A549 (cell line): ENCODE measurements at regions of chr6 and their contacts with region 1.

Region 1: DNA sequence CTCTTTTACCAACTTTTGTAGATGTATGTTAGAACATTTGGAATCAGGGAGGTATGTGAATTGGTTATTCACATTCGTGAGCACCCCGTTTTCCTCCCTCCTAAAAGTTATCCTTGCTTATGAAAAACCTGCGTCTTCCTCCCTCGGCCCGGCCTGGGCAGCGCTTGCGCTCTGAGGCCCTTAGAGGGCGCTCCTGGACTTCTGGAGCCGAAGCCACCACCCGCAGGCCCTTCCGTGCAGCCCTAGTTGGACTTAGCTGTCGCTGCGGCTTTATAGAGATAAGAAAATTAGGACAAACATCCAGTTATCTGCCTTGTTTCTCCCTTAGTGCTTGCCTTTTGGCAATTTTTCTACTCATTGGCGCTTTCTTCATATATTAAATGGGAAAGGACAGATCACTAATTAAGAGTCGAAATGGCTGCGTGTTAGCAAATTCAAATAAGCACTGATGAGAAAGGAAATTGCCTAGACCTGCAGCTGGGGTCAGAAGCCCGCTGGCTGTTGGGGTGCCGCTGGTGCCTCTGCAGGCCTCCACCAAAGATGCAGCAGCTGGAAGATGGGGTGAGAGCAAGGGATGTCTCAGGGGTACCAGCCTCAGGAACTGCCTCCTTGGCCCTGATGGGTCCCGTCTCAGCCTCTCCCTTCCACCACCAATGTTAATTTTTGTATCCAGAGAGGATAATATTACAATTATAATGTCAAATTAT is 5.2 kb downstream of the FNDC1 start:
- DNase-seq: peak; percentile 46 to 53
- ATAC-seq: peak; percentile 76 to 94; a peak in 5 of 6 replicates
- H3K4me3 ChIP-seq: no peak overlapping the region
- H3K27ac ChIP-seq: no peak overlapping the region
- H3K4me1 ChIP-seq: peaks cover 6% of the 10 kb centered on the region; the same call in 2 of the 3 replicates
- CTCF ChIP-seq: peak; percentile 69
- EP300 ChIP-seq: no peak
- POLR2A ChIP-seq: no peak
- RAD21 ChIP-seq: peak; percentile 75 to 78

Region 2: GRCh38 chr6:159184559-159184958 is 10.1 kb after region 1 on chr6:
- CTCF ChIA-PET with region 1: interaction called, 20 read pairs
- POLR2A ChIA-PET with region 1: no interaction called
- DNase-seq: no peak
- ATAC-seq: no peak
- H3K4me3 ChIP-seq: no peak overlapping the region
- H3K27ac ChIP-seq: no peak overlapping the region
- H3K4me1 ChIP-seq: no peaks in the 10 kb centered on the region
- CTCF ChIP-seq: no peak
- EP300 ChIP-seq: no peak
- POLR2A ChIP-seq: no peak
- RAD21 ChIP-seq: no peak